Activated T-helper 2 cell treated with anti-CD3 and anti-CD28 coated beads, Interferon-gamma antibody, Interleukin-2, Interleukin-4, amounts not matched to agents 10 μg/mL and 5 μg/mL and 100 μg/mL, durations not matched to agents 14 hours and 24 hours and 36 hours (primary cell): ENCODE measurements at regions of chr17 and their contacts with region 1.

Region 1: GRCh38 chr17:7862692-7863437 is 5.1 kb downstream of the CYB5D1 start:
- DNase-seq: no peak
- H3K4me3 Mint-ChIP-seq: no peak overlapping the region
- H3K27ac Mint-ChIP-seq: peak overlapping the region; percentile 43
- H3K4me1 Mint-ChIP-seq: peaks cover 28% of the 10 kb centered on the region
- H3K27me3 Mint-ChIP-seq: no peaks in the 10 kb centered on the region

Region 2: DNA sequence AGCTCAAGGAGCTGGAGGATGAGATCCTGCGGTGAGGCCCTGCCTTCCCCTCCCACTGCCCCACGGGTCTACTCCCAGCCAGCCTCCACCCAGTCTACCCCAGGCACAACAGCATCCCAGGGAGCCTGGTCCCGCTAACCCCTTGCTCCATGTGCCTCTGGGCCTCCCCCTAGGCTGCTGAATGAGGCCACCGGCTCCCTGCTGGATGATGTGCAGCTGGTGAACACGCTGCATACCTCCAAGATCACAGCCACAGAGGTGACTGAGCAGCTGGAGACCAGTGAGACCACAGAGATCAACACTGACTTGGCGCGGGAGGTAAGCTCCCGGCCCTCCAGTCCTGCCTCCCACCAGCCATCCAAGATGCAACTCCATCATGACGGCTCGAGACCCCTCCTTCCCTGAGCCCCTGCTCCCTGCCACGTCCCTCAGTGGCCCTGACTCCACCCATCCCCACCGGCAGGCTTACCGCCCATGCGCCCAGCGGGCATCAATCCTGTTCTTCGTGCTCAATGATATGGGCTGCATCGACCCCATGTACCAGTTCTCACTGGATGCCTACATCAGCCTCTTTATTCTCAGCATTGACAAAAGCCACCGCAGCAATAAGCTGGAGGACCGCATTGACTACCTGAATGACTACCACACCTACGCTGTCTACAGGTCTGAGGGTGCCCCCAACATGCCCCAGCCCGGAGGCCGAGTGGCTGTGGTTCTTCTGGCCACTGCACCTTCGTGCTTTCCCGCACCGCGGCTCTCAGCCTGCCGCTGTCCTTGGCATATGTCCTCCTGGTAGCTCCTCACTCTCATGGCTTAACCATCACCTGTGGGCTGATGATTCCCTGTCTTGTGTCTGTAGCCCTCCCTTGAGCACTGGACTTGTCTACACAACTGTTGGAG is 43.9 kb before region 1 on chr17:
- intact Hi-C with region 1: no loop called
- DNase-seq: no peak
- H3K4me3 Mint-ChIP-seq: no peak overlapping the region
- H3K27ac Mint-ChIP-seq: no peak overlapping the region
- H3K4me1 Mint-ChIP-seq: no peaks in the 10 kb centered on the region
- H3K27me3 Mint-ChIP-seq: no peaks in the 10 kb centered on the region

Region 3: DNA sequence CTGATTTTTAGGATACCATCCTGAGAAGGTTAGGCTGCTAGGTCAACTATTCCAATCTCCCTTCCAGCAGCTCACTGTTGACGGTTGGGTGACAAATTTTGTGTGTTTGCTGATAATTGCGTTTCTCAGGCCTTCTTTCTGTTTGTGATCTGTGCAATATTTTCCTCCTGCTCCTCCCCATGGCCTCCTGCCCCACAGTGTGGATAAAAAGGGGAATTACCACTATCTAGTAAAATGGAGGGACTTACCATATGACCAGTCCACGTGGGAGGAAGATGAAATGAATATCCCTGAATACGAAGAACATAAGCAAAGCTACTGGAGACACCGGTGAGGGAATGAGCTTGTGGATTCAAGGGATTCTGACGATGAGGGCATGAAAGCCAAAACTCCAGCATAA is 34.9 kb after region 1 on chr17:
- intact Hi-C with region 1: no loop called
- DNase-seq: no peak
- H3K4me3 Mint-ChIP-seq: no peak overlapping the region
- H3K27ac Mint-ChIP-seq: peak overlapping the region; percentile 61
- H3K4me1 Mint-ChIP-seq: peaks cover 11% of the 10 kb centered on the region
- H3K27me3 Mint-ChIP-seq: no peaks in the 10 kb centered on the region

Region 4: GRCh38 chr17:7977039-7977438 is 114.2 kb after region 1 on chr17:
- intact Hi-C with region 1: no loop called
- DNase-seq: no peak
- H3K4me3 Mint-ChIP-seq: no peak overlapping the region
- H3K27ac Mint-ChIP-seq: no peak overlapping the region
- H3K4me1 Mint-ChIP-seq: peaks cover 4% of the 10 kb centered on the region
- H3K27me3 Mint-ChIP-seq: peaks cover 5% of the 10 kb centered on the region

Region 5: GRCh38 chr17:7989781-7990655 is 127.2 kb after region 1 on chr17:
- intact Hi-C with region 1: loop called (anchors 2 kb)
- DNase-seq: peak; percentile 86
- H3K4me3 Mint-ChIP-seq: peak overlapping the region; percentile 67
- H3K27ac Mint-ChIP-seq: peak overlapping the region; percentile 73
- H3K4me1 Mint-ChIP-seq: peaks cover 20% of the 10 kb centered on the region
- H3K27me3 Mint-ChIP-seq: peaks cover 17% of the 10 kb centered on the region